GM13976 (cell line): ENCODE measurements at regions of chr10 and their contacts with region 1.

Region 1: GRCh38 chr10:14959276-14960057 is at the start of gene MEIG1:
- DNase-seq: peak; percentile 94
- CTCF ChIP-seq: no peak

Region 2: GRCh38 chr10:14507176-14507575 is 452.3 kb before region 1 on chr10:
- in situ Hi-C with region 1: loop called (anchors 25 kb)
- DNase-seq: no peak
- CTCF ChIP-seq: no peak